Dendritic cell treated with granulocyte-macrophage colony-stimulating factor and Interleukin-4, amounts not matched to agents 40 ng/mL and 50 ng/mL, for 4 days (primary cell): ENCODE measurements at regions of chr11 and their contacts with region 1.

Region 1: GRCh38 chr11:71977743-71978418 is 20.8 kb upstream of the IL18BP start:
- H3K4me3 Mint-ChIP-seq: peak overlapping the region; percentile 17
- H3K27ac Mint-ChIP-seq: peak overlapping the region; percentile 91
- H3K4me1 Mint-ChIP-seq: peaks cover 37% of the 10 kb centered on the region
- H3K27me3 Mint-ChIP-seq: no peaks in the 10 kb centered on the region

Region 2: GRCh38 chr11:71453037-71453898 is 524.6 kb before region 1 on chr11 and contains the start of gene NADSYN1:
- intact Hi-C with region 1: no loop called
- H3K4me3 Mint-ChIP-seq: peak within 1 kb of the TSS; percentile 91
- H3K27ac Mint-ChIP-seq: peak within 1 kb of the TSS; percentile 94
- H3K4me1 Mint-ChIP-seq: peaks cover 71% of the 10 kb centered on the region
- H3K27me3 Mint-ChIP-seq: no peaks in the 10 kb centered on the region

Region 3: GRCh38 chr11:71936825-71937224 is 41.1 kb before region 1 on chr11:
- intact Hi-C with region 1: no loop called
- H3K4me3 Mint-ChIP-seq: no peak overlapping the region
- H3K27ac Mint-ChIP-seq: no peak overlapping the region
- H3K4me1 Mint-ChIP-seq: peaks cover 22% of the 10 kb centered on the region
- H3K27me3 Mint-ChIP-seq: no peaks in the 10 kb centered on the region

Region 4: GRCh38 chr11:71951741-71952310 is 26.1 kb before region 1 on chr11:
- intact Hi-C with region 1: no loop called
- H3K4me3 Mint-ChIP-seq: no peak overlapping the region
- H3K27ac Mint-ChIP-seq: no peak overlapping the region
- H3K4me1 Mint-ChIP-seq: peaks cover 27% of the 10 kb centered on the region
- H3K27me3 Mint-ChIP-seq: no peaks in the 10 kb centered on the region

Region 5: GRCh38 chr11:71996940-71997339 is 19.1 kb after region 1 on chr11:
- intact Hi-C with region 1: loop called (anchors 2 kb)
- H3K4me3 Mint-ChIP-seq: no peak overlapping the region
- H3K27ac Mint-ChIP-seq: peak overlapping the region; percentile 96
- H3K4me1 Mint-ChIP-seq: peaks cover 96% of the 10 kb centered on the region
- H3K27me3 Mint-ChIP-seq: no peaks in the 10 kb centered on the region

Region 6: DNA sequence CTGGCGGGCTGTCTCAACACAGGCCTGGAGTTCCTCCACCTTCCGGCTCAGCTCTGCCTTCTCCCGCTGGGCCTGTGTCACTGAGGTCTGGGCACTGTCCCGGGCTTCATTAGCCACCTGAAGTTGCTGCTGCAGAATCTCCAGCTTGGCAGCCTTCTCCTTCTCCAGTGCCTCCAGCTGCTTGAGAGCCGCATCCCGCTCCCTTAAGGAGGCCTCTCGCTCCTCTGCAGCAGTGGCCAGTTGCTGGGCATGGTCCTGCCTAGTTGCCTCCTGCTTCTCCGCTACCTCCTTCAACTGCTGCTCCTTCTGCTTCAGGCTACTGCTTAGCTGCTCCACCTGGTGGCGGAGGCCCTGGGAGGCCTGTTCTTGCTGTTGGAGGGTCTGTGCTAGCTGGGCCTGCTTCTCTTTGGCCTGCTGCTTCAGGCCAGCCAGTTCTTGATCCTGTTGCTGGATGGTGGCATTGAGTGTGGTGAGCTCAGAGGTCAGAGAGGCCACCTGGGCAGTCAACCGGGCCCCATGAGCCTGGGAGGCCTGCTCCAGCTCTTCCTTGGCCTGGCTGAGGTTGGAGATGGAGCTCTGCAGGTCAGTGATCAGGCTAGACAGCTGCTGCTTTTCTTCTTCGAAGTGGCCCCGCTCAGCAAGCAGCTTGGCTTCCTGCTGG is 37.8 kb after region 1 on chr11:
- intact Hi-C with region 1: loop called (anchors 5 kb)
- H3K4me3 Mint-ChIP-seq: no peak overlapping the region
- H3K27ac Mint-ChIP-seq: no peak overlapping the region
- H3K4me1 Mint-ChIP-seq: no peaks in the 10 kb centered on the region
- H3K27me3 Mint-ChIP-seq: no peaks in the 10 kb centered on the region

Region 7: DNA sequence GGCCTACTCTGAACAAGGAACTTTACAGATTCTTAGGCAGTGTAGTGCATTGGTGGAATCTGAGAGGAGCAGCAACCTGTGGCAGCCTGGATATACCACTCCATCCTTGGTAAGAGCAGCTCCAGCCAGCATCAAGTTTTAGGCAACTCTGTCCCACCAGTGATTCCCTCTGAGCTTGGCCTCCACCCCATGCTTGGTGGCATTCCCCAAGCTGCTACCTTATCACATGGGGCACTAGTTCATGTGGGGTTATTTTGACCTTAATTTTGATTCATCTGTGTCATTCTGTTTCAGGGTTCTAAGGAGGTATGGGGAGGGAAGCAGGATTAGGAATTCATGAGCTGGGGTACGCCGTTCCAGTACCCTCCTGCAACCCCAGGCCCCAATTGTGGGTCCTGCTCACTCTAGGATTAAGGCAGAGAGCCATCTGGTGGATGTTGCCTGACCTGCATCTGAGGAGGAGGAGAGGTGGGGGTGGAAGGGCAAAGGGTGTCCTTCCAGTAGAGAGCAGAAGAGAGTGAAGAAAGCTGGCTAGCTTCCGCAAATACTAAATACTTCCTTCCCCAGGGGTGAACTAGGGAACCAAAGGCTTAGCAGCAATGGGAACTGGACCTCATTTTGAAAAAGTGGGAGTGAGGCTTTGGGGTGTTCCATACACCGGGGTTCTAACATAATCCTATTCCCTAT is 113.3 kb after region 1 on chr11:
- intact Hi-C with region 1: loop called (anchors 5 kb)
- H3K4me3 Mint-ChIP-seq: no peak overlapping the region
- H3K27ac Mint-ChIP-seq: peak overlapping the region; percentile 79
- H3K4me1 Mint-ChIP-seq: peaks cover 31% of the 10 kb centered on the region
- H3K27me3 Mint-ChIP-seq: no peaks in the 10 kb centered on the region